ENCODE measurements at regions of chr18 and their contacts with region 1.

Region 1: DNA sequence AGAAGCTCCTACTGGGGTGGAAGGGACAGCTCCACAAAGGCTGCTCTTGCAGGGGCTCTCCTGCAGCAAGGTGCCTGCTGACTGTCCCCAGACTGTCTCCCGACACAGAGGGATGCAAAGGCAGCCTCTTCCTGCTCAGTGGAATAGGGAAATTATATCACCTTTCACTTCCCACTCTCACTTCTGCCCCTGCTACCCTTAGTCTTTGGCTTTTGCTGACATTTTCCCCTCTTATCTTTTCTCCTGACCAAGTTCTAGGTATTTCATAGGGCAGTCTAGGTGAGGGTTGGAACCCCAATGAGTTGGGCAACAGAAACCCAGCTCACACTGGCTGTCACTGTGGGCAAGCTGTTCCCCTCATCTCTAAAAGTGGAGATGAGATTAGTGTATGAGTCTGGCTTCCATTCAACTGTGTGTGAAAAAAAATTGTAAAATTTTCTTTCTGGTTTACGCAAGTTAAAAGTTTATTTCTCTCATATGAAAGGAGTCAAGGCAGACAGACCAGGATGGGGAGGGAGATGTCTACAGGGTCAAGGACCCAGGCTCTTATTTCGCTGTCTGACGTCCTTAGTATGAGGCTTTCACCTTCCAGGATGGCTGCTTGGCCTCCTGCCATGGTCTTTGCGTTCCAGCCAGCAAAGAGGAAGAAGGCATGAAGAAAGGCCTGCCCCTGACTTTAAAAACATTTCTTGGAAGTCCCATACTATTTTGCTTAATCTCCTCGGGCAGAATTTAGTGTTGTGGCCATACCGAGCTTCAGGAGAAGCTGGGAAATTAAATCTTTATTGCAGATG is 7.5 kb upstream of the MOCOS start:
- DNase-seq: no peak
- H3K4me3 Mint-ChIP-seq: no peak overlapping the region
- H3K27ac Mint-ChIP-seq: no peak overlapping the region
- H3K4me1 Mint-ChIP-seq: peaks cover 10% of the 10 kb centered on the region
- H3K27me3 Mint-ChIP-seq: no peaks in the 10 kb centered on the region

Region 2: DNA sequence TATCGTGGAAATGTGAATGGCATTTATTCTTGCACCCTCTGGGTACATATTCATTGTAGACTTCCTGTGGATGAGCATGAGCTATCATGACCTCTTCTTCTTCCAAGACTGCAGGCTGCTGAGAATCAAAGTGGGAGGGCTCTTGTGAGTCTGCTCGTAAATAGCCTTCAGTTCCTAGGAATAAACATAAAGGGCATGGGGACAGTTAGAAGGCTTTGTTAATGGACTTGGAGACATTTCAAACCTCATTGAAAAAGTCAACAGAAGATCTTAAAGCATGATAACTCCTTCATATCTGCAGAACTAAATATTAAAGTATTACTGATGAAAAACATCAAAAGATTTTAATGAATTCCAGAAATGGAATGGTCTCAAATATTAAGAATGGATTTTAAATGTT is 65.5 kb before region 1 on chr18:
- intact Hi-C with region 1: loop called (anchors 10 kb)
- DNase-seq: no peak
- H3K4me3 Mint-ChIP-seq: no peak overlapping the region
- H3K27ac Mint-ChIP-seq: no peak overlapping the region
- H3K4me1 Mint-ChIP-seq: no peaks in the 10 kb centered on the region
- H3K27me3 Mint-ChIP-seq: no peaks in the 10 kb centered on the region